Gastrocnemius medialis (tissue), 4 donors: ENCODE measurements at regions of chr2 and their contacts with region 1.

Region 1: GRCh38 chr2:43131024-43131889 is 95.1 kb downstream of the ZFP36L2 start:
- DNase-seq: peak; percentile 92 to 95
- ATAC-seq: peak; percentile 82 to 84
- H3K4me3 ChIP-seq: no peak overlapping the region
- H3K27ac ChIP-seq: peak overlapping the region; percentile 36 to 88 (median 80)
- H3K4me1 ChIP-seq: peaks cover 16 to 28% of the 10 kb centered on the region in 2 donors
- H3K27me3 ChIP-seq: no peaks in the 10 kb centered on the region
- CTCF ChIP-seq: peak; percentile 12 to 55 (median 47)
- POLR2A ChIP-seq: peak in 1 of 2 donors; percentile 27

Region 2: DNA sequence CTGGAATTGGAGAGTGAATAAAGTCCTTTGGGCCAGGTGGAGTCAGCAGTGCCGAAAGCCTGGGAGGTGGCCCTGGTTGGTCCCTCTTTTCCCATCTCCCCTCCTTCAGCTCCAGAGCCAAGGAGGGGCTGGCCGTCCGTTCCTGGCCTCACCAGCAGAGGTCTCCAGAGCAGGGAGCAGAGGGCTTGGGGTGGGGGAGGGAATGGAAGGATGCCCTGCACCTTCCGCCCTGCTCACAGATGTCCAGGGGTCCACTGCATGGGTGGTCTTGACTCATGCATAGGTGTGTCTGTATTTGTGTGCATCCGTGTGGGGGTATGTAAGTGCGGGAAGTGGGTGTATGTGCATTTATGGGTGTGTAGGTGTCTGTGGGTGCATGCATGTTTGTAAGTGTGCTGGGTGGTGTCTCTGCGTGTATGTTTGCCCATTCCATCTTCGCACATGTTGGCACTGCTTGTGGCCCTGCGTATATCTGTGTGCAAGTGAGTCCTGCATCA is 106.7 kb before region 1 on chr2:
- in situ Hi-C with region 1: loop called in 1 of 4 experiments (anchors 10 kb)
- intact Hi-C with region 1: no loop called
- DNase-seq: peak; percentile 27 to 57
- ATAC-seq: peak; percentile 43 to 54
- H3K4me3 ChIP-seq: no peak overlapping the region
- H3K27ac ChIP-seq: no peak overlapping the region
- H3K4me1 ChIP-seq: peaks cover 3 to 7% of the 10 kb centered on the region in 2 donors
- H3K27me3 ChIP-seq: no peaks in the 10 kb centered on the region
- CTCF ChIP-seq: peak; percentile 57 to 90 (median 84)
- POLR2A ChIP-seq: no peak

Region 3: DNA sequence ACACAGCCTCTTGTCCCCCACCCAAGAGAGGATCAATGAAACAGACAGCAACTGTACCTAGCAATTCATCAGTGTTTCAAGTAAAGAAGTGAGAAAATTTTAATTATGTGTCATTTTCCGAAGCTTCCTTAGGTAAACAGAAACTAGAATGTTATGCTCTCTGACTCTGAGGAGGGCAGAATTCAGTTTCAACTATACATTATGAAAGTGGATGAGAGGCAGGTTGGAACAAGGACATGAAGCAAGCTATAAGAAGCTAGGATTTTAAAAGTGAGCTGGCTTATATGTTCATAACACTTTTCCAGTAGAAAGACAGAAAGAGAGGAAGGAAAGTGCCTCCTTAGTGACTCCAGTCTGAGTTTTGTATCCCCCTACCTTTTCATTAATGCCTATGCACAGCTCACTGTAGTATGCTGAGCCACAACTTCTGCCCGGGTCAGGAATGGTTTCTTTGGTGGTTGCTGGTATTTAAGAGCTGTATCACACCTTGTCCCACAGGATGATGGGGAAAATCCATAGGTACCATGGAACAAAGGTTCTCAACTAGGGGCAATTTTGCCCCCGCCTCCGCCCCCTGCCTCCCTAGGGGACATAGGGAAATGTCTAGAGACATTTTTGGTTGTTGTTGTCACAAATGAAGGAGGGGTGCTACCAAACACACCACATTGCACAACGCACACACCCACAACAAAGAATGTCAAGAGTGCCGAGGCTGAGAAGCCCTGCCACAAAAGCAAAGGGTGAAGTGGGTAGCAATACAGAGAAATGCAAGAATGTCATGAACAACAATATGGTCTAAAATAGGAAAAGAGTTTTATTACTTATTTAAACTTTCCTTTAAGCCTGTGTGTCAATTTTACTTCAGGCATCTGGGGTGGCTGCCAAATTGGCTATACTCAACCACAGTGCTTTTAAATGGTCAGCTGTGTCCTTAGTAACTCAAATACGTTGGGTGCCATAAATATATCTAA is 256.1 kb after region 1 on chr2:
- in situ Hi-C with region 1: no loop called
- intact Hi-C with region 1: no loop called
- DNase-seq: no peak
- ATAC-seq: peak in 1 of 2 donors; percentile 27
- H3K4me3 ChIP-seq: no peak overlapping the region
- H3K27ac ChIP-seq: peak overlapping the region in 1 of 4 donors; percentile 0
- H3K4me1 ChIP-seq: peaks cover 26 to 29% of the 10 kb centered on the region in 2 donors
- H3K27me3 ChIP-seq: no peaks in the 10 kb centered on the region
- CTCF ChIP-seq: no peak
- POLR2A ChIP-seq: no peak